ENCODE measurements at regions of chr18 and their contacts with region 1.

Region 1: DNA sequence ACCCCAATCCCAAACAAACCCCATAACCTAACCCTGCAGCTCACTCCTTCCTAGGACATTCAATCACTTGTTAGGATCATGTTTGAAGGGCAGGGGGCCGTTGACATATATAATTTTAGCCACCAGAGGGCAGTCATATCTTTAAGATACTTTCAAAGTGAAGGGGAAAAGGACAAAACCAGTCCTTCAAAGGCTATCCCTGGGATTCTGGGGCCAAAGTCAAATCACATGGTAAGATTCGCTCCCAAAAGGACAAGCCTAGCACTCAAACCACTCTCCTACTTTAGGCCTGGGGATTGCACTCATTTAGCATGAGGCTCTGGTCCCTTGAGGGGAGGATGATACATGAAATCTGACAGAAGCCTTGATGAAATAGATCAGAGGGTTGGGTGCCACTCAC is 44.6 kb downstream of the HAUS1 start:
- DNase-seq: no peak
- ATAC-seq: peak; percentile 88
- H3K4me3 ChIP-seq: no peak overlapping the region
- H3K27ac ChIP-seq: no peak overlapping the region
- H3K4me1 ChIP-seq: no peaks in the 10 kb centered on the region
- H3K27me3 ChIP-seq: no peaks in the 10 kb centered on the region
- CTCF ChIP-seq: peak; percentile 48 to 74 (median 67)
- EP300 ChIP-seq: no peak
- POLR2A ChIP-seq: no peak
- RAD21 ChIP-seq: peak; percentile 70

Region 2: DNA sequence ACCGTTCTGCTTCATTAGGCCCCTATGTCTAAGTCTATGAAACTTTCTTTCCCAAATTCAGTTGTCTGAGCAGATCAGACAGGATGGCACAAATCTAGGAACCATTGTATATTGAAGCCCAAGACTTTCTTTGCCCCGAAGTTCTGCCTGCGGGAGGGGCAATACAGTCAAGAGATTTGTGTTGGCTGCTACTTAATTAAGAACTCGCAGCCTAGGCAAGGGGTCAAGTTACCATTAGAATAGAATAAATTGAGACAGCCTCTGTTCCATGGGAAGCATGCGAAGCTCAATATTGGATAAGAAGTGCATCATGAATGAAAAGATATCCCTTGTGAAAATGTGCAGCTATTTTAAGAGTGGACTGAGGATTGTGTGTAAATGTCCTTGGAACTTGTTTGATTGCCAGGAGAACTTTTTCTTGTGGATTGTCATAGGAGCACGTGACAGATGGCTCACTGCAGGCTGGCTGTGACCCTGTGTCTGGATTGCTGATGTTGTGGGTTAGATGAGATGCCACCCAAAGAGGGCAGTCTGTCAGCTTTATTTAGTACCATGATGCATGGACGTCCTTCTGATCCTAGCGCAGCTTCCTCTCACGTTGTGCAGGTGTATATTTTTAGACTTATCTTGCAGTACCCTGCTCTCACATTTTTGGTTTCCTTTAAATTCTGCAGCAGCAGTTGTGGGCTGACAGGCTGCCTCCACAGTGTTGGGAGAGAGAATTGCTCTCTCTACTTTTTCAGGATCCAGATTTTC is 13.7 kb before region 1 on chr18:
- CTCF ChIA-PET with region 1: interaction called, 17 read pairs
- POLR2A ChIA-PET with region 1: no interaction called
- RAD21 ChIA-PET with region 1: no interaction called
- SMC1A ChIA-PET with region 1: no interaction called
- in situ Hi-C with region 1: no loop called
- intact Hi-C with region 1: no loop called
- DNase-seq: no peak
- ATAC-seq: no peak
- H3K4me3 ChIP-seq: no peak overlapping the region
- H3K27ac ChIP-seq: no peak overlapping the region
- H3K4me1 ChIP-seq: no peaks in the 10 kb centered on the region
- H3K27me3 ChIP-seq: no peaks in the 10 kb centered on the region
- CTCF ChIP-seq: no peak
- EP300 ChIP-seq: no peak
- POLR2A ChIP-seq: no peak
- RAD21 ChIP-seq: no peak

Region 3: GRCh38 chr18:46281185-46282176 is 132.7 kb after region 1 on chr18:
- CTCF ChIA-PET with region 1: interaction called, 6 read pairs
- POLR2A ChIA-PET with region 1: no interaction called
- RAD21 ChIA-PET with region 1: interaction called, 7 read pairs
- SMC1A ChIA-PET with region 1: interaction called, 6 read pairs
- in situ Hi-C with region 1: no loop called
- intact Hi-C with region 1: loop called (anchors 2 kb)
- DNase-seq: no peak
- ATAC-seq: peak; percentile 96
- H3K4me3 ChIP-seq: no peak overlapping the region
- H3K27ac ChIP-seq: no peak overlapping the region
- H3K4me1 ChIP-seq: no peaks in the 10 kb centered on the region
- H3K27me3 ChIP-seq: no peaks in the 10 kb centered on the region
- CTCF ChIP-seq: peak; percentile 85 to 97 (median 87)
- EP300 ChIP-seq: no peak
- POLR2A ChIP-seq: no peak
- RAD21 ChIP-seq: peak; percentile 95

Region 4: DNA sequence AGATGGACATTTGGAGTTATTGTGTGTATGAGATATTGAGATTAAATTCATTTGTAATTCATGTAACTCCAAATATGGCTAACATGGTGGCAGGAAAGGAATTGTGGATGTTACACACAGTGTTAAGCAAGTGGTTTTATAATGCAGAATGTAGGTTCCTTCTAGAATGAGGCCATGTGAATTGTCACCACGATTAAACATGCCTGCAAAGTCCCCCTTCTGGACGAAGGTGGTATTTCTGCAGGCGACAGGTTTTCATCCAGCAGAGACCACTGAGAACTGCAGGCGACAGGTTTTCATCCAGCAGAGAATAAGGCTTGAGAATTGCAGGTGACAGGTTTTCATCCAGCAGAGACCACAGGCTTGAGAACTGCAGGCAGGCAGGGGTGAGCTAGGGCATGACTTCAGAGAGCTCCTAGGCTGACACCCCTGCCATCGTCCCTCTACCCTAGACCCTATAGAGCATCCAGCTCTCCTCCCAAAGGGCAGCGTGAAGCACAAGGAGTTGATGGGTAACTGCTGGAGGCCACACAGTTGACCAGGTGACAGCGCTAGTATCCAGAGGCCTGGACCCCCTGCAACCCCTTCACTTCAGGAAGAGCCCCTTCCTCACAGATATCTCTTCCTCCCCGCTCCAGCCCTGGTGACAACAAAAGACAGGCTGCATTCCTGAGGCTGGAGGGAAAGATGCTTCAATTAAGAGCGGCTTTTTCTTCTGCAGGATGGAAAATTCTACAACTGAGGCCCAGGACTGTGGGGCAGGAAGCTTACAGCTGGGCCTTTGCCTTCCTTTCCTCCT is 332.4 kb after region 1 on chr18:
- CTCF ChIA-PET with region 1: interaction called, 3 read pairs
- POLR2A ChIA-PET with region 1: no interaction called
- RAD21 ChIA-PET with region 1: no interaction called
- SMC1A ChIA-PET with region 1: interaction called, 3 read pairs
- in situ Hi-C with region 1: loop called (anchors 10 kb)
- intact Hi-C with region 1: loop called (anchors 2 kb)
- DNase-seq: no peak
- ATAC-seq: peak; percentile 77
- H3K4me3 ChIP-seq: no peak overlapping the region
- H3K27ac ChIP-seq: no peak overlapping the region
- H3K4me1 ChIP-seq: no peaks in the 10 kb centered on the region
- H3K27me3 ChIP-seq: peaks cover 0 to 6% of the 10 kb centered on the region in 2 experiments; a peak in 2 of 4 replicates
- CTCF ChIP-seq: peak; percentile 54 to 76 (median 69)
- EP300 ChIP-seq: no peak
- POLR2A ChIP-seq: no peak
- RAD21 ChIP-seq: peak; percentile 67